AG04449 (cell line): ENCODE measurements at regions of chr12 and their contacts with region 1.

Region 1: DNA sequence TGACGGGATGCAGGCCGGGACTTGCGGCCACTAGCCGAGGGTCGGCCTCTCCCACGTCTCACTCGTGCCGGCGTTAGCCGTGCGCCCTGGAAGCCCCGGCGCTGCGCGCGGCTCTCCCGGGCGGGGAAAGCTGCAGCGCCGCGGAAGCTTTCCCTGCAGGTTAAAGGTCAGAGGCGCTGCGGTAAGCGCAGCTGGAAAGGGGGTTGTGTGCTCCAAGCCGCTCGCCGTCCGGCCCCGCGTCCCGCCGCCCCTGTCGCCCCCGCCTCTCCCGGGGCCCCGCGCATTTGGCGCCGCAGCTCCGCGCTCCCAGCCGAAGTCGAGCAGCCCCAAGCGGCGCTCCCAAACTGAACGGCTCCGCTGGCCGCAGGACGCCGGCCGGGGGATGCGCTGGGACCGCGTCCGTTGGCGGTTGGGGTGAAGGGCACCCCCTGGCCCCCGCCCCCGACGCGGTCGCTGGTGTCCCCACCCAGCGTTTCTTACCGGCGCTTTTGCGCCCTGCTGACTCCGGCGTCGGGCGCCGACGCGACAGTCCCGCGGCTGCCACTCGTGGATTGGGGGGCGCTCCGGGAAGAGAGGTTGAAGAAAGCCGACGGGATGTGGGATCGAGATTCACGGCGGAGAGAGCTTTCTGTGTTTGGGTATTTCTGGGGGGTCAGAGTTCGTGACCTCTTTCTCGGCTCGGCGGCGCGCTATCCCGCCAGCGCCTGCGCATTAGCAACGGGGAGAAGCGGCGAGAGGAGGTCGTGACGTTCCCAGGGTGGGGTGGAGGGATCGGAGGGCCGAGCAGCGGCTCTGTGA is at the start of gene NR2C1:
- DNase-seq: peak; percentile 47
- H3K4me3 ChIP-seq: peak within 1 kb of the TSS; percentile 86
- CTCF ChIP-seq: no peak

Region 2: DNA sequence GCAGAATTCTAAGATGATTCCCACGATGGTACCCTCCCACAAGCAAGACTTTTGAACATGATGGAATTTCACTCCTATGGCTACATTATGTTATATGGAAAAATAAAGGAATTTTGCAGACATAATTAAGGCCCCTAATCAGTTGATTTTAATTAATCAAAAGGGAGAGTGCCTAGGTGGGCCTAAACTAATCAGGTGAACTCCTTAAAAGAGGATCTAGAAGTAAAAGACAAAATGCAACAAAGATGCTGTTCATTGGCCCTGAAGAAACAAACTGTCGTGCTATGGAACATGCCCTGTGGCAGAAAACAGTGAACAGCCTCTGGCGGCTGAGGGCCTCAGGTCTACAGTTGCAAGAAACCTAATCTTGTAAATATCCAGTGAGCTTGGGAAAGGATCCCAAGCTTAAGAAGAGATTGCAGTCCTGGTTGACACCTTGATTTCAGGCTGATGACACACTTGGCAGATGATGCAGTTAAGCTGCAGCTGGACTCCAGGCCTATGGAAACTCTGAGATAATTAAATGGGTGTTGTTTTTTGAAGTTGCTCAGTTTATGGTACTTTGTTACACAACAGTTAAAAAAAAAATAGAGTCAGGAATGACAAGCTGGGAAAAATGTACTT is 436.5 kb before region 1 on chr12:
- CTCF ChIA-PET with region 1: no interaction called
- POLR2A ChIA-PET with region 1: no interaction called
- DNase-seq: no peak
- H3K4me3 ChIP-seq: no peak overlapping the region
- CTCF ChIP-seq: no peak

Region 3: DNA sequence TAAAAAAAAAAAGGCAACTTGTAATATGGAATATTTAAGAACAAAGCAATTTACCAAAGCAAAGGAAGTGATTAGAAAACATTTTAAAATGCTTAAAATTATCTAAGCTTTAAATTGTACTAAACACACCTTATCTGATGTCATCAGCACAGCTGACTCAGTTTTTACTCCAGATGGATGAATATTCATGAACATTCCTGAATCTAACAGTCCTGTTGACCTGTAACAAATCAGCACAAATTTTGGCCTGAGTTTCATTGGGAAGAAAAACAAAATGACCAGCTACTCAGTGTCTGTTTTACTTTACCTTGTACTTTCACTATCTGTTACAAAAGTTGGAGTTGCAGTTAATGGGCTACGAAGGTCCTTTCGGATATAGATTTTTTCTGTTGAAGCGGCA is 15.7 kb before region 1 on chr12:
- CTCF ChIA-PET with region 1: interaction called, 15 read pairs
- POLR2A ChIA-PET with region 1: no interaction called
- DNase-seq: no peak
- H3K4me3 ChIP-seq: no peak overlapping the region
- CTCF ChIP-seq: no peak

Region 4: GRCh38 chr12:95083938-95084337 is 10.8 kb after region 1 on chr12:
- CTCF ChIA-PET with region 1: interaction called, 51 read pairs
- POLR2A ChIA-PET with region 1: no interaction called
- DNase-seq: peak; percentile 38
- H3K4me3 ChIP-seq: no peak overlapping the region
- CTCF ChIP-seq: no peak

Region 5: DNA sequence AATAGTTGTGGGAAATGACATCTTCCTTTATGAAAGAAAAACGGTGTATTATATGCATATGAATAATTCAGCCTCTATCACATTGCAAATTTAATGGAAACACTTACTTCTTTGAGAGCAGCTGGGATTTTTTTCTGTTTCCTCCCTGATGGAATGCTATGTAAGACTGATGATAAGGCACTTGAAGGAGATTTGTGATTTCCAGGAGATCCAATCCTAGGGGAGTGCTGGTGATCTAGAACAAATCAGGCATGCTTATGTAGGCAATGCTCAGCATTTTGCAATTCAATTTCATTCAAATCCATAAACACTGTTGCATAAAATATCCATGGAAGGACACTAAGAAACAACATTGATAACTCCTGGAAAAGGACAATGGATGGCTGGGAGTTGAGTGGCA is 16.4 kb after region 1 on chr12:
- CTCF ChIA-PET with region 1: interaction called, 51 read pairs
- POLR2A ChIA-PET with region 1: interaction called, 3 read pairs
- DNase-seq: no peak
- H3K4me3 ChIP-seq: no peak overlapping the region
- CTCF ChIP-seq: no peak

Region 6: DNA sequence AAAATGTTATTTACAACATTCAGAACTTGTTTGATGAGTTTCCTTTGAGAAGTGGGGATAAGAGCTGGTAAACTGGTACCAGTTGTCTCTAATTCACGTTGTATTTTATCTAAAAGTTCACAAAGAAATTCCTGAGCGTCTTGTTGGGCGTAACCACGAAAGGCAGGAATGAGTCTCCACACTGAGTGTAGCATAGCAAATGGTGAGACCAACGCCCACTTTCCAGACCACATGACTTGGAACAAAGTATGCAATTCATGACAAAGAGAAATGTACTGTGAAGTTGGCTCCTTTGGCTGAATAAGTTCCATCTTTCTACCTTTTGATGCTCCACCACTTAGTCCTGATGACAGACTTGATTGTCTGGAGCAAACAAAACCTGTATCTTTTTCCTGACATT is 459.8 kb after region 1 on chr12:
- CTCF ChIA-PET with region 1: interaction called, 12 read pairs
- POLR2A ChIA-PET with region 1: no interaction called
- DNase-seq: no peak
- H3K4me3 ChIP-seq: no peak overlapping the region
- CTCF ChIP-seq: no peak